WTC11 (cell line): ENCODE measurements at regions of chr2 and their contacts with region 1.

Region 1: DNA sequence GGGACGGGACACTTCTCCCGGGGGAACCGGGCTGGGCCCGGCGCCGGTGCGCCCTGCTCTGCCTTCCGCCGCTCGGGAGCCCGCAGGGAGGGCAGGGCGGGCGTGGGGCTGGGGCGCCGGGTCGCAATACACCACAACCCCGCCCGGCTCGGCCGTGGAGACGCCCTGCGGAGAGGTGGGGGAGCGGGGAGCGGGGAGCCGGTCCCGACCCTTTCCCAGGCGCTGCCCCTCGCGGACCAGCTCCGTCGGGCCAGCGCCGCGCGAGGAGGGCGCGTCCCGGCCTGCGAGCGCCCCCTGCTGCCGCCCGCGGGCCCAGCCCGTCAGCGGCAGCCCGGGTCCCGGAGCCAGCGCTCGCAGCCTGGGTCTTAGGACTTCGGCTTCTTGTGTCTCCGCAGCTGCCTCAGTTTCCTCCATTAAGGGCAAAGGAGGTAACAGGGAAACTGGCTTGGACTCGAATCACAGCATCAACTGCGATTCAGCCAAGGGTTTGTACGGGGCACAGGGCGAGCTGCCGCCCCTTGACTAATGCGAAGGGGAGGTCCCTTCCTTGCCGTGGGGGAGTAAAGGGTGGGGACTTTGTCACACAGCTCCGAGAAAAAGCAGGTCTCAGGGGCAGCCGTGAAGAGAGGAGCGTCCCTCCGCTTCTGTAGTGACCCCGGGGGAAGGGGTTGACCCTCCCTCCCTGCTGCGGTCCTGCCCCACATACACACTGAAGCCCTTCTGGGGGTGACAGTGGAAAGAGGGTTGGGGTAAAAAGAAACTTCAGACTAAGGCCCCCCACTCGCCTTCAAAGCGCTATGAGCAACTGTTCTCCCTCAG is 717 bp upstream of the ADRA2B start:
- DNase-seq: peak; percentile 65
- ATAC-seq: peak; percentile 72
- H3K4me3 Mint-ChIP-seq: peak overlapping the region; percentile 59
- H3K27ac Mint-ChIP-seq: no peak overlapping the region
- H3K4me1 Mint-ChIP-seq: peaks cover 28% of the 10 kb centered on the region
- H3K27me3 Mint-ChIP-seq: peaks cover 40% of the 10 kb centered on the region
- CTCF ChIP-seq: peak; percentile 75

Region 2: GRCh38 chr2:95667480-95667879 is 449.6 kb before region 1 on chr2:
- CTCF ChIA-PET with region 1: no interaction called
- POLR2A ChIA-PET with region 1: no interaction called
- DNase-seq: no peak
- ATAC-seq: no peak
- H3K4me3 Mint-ChIP-seq: no peak overlapping the region
- H3K27ac Mint-ChIP-seq: no peak overlapping the region
- H3K4me1 Mint-ChIP-seq: peaks cover 18% of the 10 kb centered on the region
- H3K27me3 Mint-ChIP-seq: peaks cover 11% of the 10 kb centered on the region
- CTCF ChIP-seq: no peak

Region 3: GRCh38 chr2:96024336-96025193 is 92.5 kb before region 1 on chr2:
- CTCF ChIA-PET with region 1: interaction called, 20 read pairs
- POLR2A ChIA-PET with region 1: no interaction called
- DNase-seq: no peak
- ATAC-seq: no peak
- H3K4me3 Mint-ChIP-seq: no peak overlapping the region
- H3K27ac Mint-ChIP-seq: no peak overlapping the region
- H3K4me1 Mint-ChIP-seq: 0 out of 2 replicates have a peak, but pooled peaks cover 3% of the 10 kb centered on the region
- H3K27me3 Mint-ChIP-seq: no peaks in the 10 kb centered on the region
- CTCF ChIP-seq: no peak

Region 4: DNA sequence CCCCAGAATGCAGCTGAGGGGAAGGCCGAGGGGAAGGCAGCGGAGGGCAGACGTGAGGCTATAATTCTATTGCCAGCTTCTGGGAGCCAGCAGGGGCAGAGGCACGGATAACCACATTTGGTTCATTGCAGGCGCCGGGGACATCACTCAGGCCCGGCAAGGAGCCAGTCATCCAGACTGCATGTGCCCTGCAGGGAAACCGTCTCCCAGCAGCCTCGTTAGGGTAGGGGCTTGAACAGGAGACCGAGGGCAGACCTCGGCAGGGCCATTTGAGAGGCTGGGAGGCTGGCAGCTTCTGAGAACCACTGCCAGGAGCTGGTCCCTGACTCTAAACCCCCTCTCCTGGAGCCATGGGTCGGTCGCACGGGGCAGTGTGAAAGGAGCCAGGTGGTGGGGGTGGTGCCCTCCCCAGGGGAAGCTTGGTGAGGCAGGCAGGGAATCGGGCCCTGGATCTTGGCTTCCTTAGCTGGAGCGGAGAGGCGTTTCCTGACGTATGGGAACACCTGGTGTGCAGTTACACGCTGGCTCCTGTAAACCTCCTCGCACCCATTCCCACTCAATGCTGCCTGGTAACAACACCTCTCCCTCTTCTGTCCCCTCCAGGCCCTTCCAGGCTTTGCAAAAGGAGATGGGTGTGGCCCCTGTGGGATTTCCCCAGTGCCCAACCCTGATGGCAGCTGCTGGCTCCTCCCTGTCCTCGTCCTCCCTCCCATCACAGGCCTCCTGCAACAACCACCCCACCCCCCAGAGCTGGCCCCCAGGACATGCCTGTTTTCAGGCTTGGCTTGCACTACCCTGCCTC is 25.4 kb before region 1 on chr2:
- CTCF ChIA-PET with region 1: interaction called, 12 read pairs
- POLR2A ChIA-PET with region 1: interaction called, 3 read pairs
- DNase-seq: peak; percentile 35
- ATAC-seq: peak; percentile 65
- H3K4me3 Mint-ChIP-seq: no peak overlapping the region
- H3K27ac Mint-ChIP-seq: no peak overlapping the region
- H3K4me1 Mint-ChIP-seq: peaks cover 25% of the 10 kb centered on the region
- H3K27me3 Mint-ChIP-seq: peaks cover 4% of the 10 kb centered on the region; the same call in 1 of the 2 replicates
- CTCF ChIP-seq: no peak

Region 5: DNA sequence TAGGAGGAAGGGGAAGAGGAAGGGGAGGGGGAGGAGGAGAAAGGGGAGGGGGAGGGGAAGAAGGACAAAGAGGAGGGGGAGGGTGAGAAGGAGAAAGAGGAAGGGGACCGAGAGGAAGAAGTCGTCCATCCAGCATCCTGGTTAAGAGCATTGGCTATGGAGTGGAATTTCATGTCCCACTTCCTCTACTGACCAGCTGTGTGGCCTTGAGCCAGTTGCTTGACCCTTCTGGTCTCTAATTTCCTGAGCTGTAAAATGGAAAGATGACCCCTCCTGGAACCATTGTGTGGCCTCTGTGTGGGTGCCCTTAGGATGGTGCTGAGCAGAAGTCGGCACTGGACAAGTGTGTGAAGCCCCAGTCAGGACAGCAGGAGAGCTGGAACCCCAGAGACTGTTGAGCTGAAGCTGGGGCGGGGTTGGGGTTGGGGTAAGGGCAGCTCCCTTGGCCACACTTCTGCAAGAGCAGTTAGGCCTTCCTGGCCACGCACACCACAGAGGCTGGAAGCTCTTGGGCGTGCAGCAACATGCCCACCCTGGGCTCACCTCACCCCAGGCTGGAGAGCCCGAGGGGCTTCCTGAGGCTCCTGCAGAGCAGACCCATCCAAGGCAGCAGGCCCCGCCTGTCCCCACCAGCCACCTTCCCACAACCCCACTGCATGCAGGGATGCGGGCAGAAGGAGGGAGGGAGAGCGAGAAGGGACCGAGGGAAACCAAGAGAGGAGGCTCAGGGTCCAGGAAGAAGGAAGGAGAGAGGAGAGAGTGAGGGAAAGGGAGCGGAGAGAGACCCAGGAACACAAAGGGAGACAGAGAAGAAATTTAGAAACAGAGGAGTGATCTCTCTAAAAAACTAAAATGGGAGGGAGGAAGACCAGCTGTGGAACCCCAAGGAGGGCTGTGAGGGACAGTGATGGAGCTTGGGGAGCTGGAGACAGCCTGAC is 17.0 kb before region 1 on chr2:
- CTCF ChIA-PET with region 1: interaction called, 14 read pairs
- POLR2A ChIA-PET with region 1: no interaction called
- DNase-seq: peak; percentile 17
- ATAC-seq: peak; percentile 23; the same call in 1 of the 2 replicates
- H3K4me3 Mint-ChIP-seq: no peak overlapping the region
- H3K27ac Mint-ChIP-seq: no peak overlapping the region
- H3K4me1 Mint-ChIP-seq: peaks cover 18% of the 10 kb centered on the region
- H3K27me3 Mint-ChIP-seq: no peaks in the 10 kb centered on the region; the same call in 1 of the 2 replicates
- CTCF ChIP-seq: no peak

Region 6: GRCh38 chr2:96131813-96132745 is 15.0 kb after region 1 on chr2:
- CTCF ChIA-PET with region 1: interaction called, 10 read pairs
- POLR2A ChIA-PET with region 1: no interaction called
- DNase-seq: no peak
- ATAC-seq: no peak
- H3K4me3 Mint-ChIP-seq: no peak overlapping the region
- H3K27ac Mint-ChIP-seq: no peak overlapping the region
- H3K4me1 Mint-ChIP-seq: no peaks in the 10 kb centered on the region
- H3K27me3 Mint-ChIP-seq: no peaks in the 10 kb centered on the region
- CTCF ChIP-seq: no peak

Region 7: DNA sequence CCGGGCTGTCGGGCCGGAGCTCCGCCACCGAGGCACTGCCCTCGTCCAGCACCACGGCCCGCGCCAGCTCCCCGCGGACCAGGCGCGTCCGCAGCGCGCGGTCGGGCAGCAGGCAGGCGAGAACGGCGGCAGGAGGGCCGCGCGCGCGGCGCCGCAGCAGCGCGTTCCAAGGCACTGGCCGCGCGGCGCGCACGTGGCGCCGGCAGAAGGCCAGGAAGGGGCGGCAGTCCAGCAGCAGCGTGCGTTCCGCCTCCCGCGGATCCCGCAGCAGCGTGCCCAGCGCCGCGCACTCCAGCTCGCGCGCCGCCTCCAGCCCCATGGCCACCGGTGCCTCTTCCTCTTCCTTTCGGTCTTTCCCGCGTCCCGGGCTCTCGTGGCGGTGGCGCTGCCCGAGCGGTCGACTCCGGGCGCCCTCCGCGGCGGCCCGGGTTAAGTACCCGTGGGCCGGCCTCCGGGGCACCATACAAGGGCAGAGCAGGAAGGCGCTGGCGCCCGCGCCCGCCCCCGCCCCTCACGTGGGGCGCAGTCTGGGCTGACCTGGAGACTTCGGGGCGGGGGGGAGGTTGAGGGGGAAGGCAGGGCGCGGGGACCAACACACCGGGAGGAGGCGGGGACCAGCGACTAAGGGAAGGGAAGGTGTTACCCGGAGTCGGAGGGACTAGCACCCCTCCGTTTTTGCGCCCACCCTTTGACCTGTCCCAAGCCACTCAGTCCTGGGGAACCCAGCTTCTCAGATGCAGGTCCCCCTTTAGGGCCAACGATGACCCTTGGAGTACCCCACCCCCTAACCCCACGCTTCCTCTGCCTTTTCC is 28.2 kb after region 1 on chr2 and contains the start of gene DUSP2:
- CTCF ChIA-PET with region 1: interaction called, 13 read pairs
- POLR2A ChIA-PET with region 1: no interaction called
- DNase-seq: peak; percentile 54
- ATAC-seq: peak; percentile 38
- H3K4me3 Mint-ChIP-seq: peak within 1 kb of the TSS; percentile 76
- H3K27ac Mint-ChIP-seq: no peak within 1 kb of the TSS
- H3K4me1 Mint-ChIP-seq: peaks cover 25% of the 10 kb centered on the region
- H3K27me3 Mint-ChIP-seq: peaks cover 35% of the 10 kb centered on the region
- CTCF ChIP-seq: no peak
- total RNA-seq, gene DUSP2: 4.7 to 6.8 TPM (median 5.8 TPM) in 3 replicates

Region 8: GRCh38 chr2:96291751-96292150 is 174.7 kb after region 1 on chr2:
- CTCF ChIA-PET with region 1: no interaction called
- POLR2A ChIA-PET with region 1: no interaction called
- DNase-seq: no peak
- ATAC-seq: no peak
- H3K4me3 Mint-ChIP-seq: no peak overlapping the region
- H3K27ac Mint-ChIP-seq: no peak overlapping the region
- H3K4me1 Mint-ChIP-seq: no peaks in the 10 kb centered on the region
- H3K27me3 Mint-ChIP-seq: no peaks in the 10 kb centered on the region
- CTCF ChIP-seq: no peak

Region 9: DNA sequence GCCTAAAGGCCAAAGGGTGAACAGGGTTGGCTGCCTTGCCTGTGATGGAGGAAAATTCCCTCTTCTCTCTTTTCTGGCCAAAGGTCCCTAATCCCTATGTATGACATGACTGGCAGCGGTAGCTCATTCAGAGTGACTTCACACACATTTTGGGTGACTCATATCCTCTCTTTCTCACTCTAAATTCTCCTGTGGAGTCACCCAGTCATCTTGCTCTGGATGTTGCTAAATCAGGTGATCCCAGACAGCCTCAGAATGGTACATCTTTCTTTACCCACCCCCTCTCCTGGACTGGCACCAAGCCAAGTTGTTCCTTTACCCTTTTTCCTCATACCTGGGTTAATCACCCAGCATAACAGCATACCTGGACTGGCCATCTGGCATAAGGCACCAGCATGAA is 310.8 kb after region 1 on chr2:
- CTCF ChIA-PET with region 1: no interaction called
- POLR2A ChIA-PET with region 1: no interaction called
- DNase-seq: no peak
- ATAC-seq: no peak
- H3K4me3 Mint-ChIP-seq: no peak overlapping the region
- H3K27ac Mint-ChIP-seq: no peak overlapping the region
- H3K4me1 Mint-ChIP-seq: peaks cover 9% of the 10 kb centered on the region
- H3K27me3 Mint-ChIP-seq: peaks cover 4% of the 10 kb centered on the region
- CTCF ChIP-seq: no peak